ENCODE measurements at regions of chr20 and their contacts with region 1.

Region 1: DNA sequence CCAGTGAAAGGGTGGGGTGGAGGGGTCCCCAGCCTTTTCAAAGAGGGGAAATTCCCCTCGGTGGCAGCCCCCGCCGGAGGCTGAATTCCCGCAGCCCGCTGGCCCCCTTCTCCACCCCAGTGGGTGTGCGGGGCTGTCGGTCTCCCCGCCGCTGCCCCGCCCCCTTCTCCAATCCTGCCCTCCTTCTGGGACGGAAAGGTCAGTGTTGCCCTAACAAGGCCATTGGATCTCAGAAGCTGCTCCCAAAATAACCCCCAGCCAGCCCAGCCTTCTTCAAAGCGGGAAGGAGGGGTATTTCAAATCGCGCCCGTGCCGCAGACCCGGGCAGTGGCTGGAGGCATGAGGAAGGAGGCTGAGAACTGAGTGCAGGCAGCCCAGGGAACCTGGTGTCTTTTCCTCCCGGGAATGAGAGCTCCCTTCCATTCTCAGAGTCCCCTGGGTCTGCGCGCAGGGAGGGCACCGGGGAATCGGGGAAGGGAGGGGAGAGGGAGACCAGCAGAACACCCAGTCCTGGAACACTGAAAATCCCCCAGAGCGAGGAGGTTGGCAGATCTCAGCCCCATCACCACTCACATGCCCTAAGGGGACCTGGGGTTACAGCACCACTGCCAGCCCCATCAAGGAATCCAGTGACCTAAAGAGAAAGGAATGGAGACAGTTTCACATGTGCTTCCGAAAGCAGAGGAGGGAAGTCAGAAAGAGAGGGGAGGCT is at the start of gene JPH2:
- DNase-seq: no peak
- H3K4me3 Mint-ChIP-seq: no peak within 1 kb of the TSS
- H3K27ac Mint-ChIP-seq: no peak within 1 kb of the TSS
- H3K4me1 Mint-ChIP-seq: peaks cover 6% of the 10 kb centered on the region
- H3K27me3 Mint-ChIP-seq: peaks cover 48% of the 10 kb centered on the region
- total RNA-seq, gene JPH2: not detected

Region 2: GRCh38 chr20:43448748-43449535 is 738.3 kb before region 1 on chr20:
- CTCF ChIA-PET with region 1: interaction called, 14 read pairs
- POLR2A ChIA-PET with region 1: no interaction called
- intact Hi-C with region 1: no loop called
- DNase-seq: peak; percentile 62
- H3K4me3 Mint-ChIP-seq: no peak overlapping the region
- H3K27ac Mint-ChIP-seq: no peak overlapping the region
- H3K4me1 Mint-ChIP-seq: peaks cover 3% of the 10 kb centered on the region
- H3K27me3 Mint-ChIP-seq: peaks cover 16% of the 10 kb centered on the region

Region 3: GRCh38 chr20:44407402-44408184 is 220.4 kb after region 1 on chr20:
- CTCF ChIA-PET with region 1: no interaction called
- POLR2A ChIA-PET with region 1: no interaction called
- intact Hi-C with region 1: no loop called
- DNase-seq: no peak
- H3K4me3 Mint-ChIP-seq: no peak overlapping the region
- H3K27ac Mint-ChIP-seq: no peak overlapping the region
- H3K4me1 Mint-ChIP-seq: no peaks in the 10 kb centered on the region
- H3K27me3 Mint-ChIP-seq: peaks cover 5% of the 10 kb centered on the region

Measured in activated CD4-positive, alpha-beta memory T cell treated with anti-CD3 and anti-CD28 coated beads for 36 hours (primary cell).